Breast epithelium (tissue), 4 donors: ENCODE measurements at regions of chr10 and their contacts with region 1.

Region 1: DNA sequence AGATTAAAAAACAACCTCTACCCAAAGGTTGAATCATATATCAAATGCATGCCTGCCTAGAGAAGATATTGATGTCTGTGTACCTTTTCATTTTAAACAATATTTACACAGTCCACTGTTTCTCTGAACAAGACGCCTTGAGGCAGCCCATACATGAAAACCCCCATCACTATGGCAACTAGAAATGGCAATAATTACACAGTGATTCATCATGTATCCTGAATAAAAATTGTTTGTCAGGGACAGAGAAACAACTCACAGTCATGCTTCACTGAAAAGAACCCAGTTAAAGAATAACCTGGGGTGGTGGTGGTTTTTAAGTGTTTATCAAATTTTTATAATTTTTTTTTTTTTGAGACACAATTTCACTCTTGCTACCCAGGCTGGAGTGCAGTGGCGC is 19.7 kb downstream of the DNAJC12 start:
- DNase-seq: no peak
- H3K4me3 ChIP-seq: no peak overlapping the region
- H3K27ac ChIP-seq: peak overlapping the region; percentile 67 to 70
- H3K4me1 ChIP-seq: no peaks in the 10 kb centered on the region
- H3K27me3 ChIP-seq: no peaks in the 10 kb centered on the region
- CTCF ChIP-seq: no peak
- POLR2A ChIP-seq: no peak

Region 2: DNA sequence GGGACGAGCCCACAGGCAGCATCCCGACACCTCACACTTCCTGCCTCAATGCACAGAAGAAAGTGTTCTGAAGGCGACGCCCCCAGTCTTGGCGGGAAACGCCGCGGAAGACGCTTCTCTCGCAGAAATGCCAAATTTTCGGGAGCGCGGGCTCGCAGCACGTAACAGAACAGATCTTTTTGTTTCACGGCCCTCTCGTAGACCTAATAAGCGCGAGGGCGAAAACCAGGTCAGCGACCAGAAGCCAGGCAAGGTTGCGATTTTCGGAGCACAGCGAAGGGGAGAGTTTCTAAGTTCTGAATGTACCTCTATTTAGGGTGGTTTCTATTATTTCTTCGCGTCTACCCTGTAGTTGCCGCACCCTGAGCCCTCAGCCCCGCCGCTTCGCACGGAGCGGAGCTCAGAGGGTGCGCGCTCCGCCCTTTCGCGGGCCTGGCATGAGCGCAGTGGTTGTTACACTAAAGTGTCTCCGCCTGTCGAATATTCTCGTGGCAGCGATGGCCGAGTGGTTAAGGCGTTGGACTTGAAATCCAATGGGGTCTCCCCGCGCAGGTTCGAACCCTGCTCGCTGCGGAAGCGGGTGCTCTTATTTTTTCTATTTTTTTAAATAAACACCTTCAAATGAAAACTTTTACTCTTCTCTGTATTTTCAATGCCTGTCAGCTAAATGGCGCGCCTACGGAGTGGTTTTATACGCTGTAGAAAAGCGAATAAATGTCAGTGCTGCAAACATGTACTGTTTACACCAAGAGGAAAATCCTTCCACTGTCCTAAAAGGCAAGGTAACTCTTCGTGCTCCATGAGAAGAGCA is 54.1 kb before region 1 on chr10:
- intact Hi-C with region 1: loop called (anchors 2 kb)
- DNase-seq: peak; percentile 95 to 97
- H3K4me3 ChIP-seq: peak overlapping the region; percentile 71 to 85 (median 82)
- H3K27ac ChIP-seq: peak overlapping the region; percentile 97
- H3K4me1 ChIP-seq: no peaks in the 10 kb centered on the region
- H3K27me3 ChIP-seq: no peaks in the 10 kb centered on the region
- CTCF ChIP-seq: no peak
- POLR2A ChIP-seq: no peak

Region 3: GRCh38 chr10:67943909-67944308 is 125.6 kb after region 1 on chr10:
- intact Hi-C with region 1: no loop called
- DNase-seq: no peak
- H3K4me3 ChIP-seq: no peak overlapping the region
- H3K27ac ChIP-seq: no peak overlapping the region
- H3K4me1 ChIP-seq: no peaks in the 10 kb centered on the region
- H3K27me3 ChIP-seq: no peaks in the 10 kb centered on the region
- CTCF ChIP-seq: no peak
- POLR2A ChIP-seq: no peak